ENCODE measurements at regions of chr3 and their contacts with region 1.

Region 1: GRCh38 chr3:194134757-194135528 is 1.0 kb upstream of the HES1 start:
- DNase-seq: peak; percentile 91
- H3K4me3 Mint-ChIP-seq: peak overlapping the region; percentile 77
- H3K27ac Mint-ChIP-seq: peak overlapping the region; percentile 72
- H3K4me1 Mint-ChIP-seq: peaks cover 44% of the 10 kb centered on the region
- H3K27me3 Mint-ChIP-seq: peaks cover 68% of the 10 kb centered on the region

Region 2: DNA sequence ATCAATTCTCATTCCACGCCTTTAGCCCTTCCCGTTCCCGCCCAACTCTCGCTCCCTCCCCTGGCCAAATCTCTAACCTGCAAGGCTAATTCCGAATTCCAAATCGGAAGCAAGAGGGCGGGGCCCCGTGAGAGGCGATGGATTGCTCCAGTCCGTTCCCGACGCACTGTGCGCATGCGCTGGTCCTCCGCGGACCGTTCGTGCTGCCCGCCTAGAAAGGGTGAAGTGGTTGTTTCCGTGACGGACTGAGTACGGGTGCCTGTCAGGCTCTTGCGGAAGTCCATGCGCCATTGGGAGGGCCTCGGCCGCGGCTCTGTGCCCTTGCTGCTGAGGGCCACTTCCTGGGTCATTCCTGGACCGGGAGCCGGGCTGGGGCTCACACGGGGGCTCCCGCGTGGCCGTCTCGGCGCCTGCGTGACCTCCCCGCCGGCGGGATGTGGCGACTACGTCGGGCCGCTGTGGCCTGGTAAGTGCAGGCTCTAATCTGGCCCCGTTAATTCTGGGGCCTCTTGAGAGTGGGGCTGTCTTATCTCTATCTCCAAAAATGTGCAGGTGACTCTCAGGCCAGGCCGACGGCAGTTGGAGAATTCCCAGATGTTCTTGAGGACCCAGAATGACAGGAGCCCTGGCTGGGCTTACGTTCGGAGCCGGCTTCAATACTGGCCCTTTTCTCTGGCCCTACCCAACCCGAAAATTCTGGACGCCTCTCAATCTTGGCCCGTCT is 541.8 kb before region 1 on chr3 and contains the start of gene OPA1:
- CTCF ChIA-PET with region 1: no interaction called
- POLR2A ChIA-PET with region 1: no interaction called
- intact Hi-C with region 1: loop called (anchors 2 kb)
- DNase-seq: peak; percentile 96
- H3K4me3 Mint-ChIP-seq: peak within 1 kb of the TSS; percentile 93
- H3K27ac Mint-ChIP-seq: peak within 1 kb of the TSS; percentile 97
- H3K4me1 Mint-ChIP-seq: peaks cover 37% of the 10 kb centered on the region
- H3K27me3 Mint-ChIP-seq: no peaks in the 10 kb centered on the region
- total RNA-seq, gene OPA1: 92.6 to 92.7 TPM

Region 3: DNA sequence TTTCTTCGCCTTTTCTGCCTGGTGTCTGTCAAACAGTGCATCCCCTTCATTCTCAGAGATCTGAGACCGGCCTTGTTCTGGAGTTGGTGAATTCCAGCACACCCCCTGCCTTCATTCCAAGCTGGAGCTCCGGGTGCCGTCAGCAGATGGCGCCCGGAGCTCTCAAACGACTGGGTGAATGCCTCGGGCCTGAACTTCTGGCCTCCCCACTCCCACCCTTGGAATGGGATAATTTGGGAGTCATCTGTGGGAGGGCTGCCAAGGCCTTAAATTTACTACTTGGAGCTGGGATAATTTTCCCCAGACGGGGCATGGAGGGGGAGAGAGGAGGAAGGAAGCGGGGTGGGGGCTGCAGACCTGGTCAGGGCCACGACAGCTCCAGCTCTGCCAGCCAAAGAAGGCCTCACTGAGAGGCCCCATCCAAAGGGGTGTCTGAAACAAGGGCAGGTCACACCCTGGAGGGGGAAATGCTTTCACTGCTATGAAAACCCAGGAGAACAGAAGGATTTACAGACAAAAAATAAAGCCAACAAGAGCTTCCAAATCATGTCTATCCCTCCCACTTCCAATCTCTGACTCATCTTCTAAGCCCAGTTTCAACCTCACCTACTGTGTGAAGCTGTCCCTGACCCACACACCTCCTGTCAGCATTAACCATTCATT is 354.0 kb before region 1 on chr3:
- CTCF ChIA-PET with region 1: interaction called, 23 read pairs
- POLR2A ChIA-PET with region 1: interaction called, 3 read pairs
- intact Hi-C with region 1: loop called (anchors 2 kb)
- DNase-seq: peak; percentile 42
- H3K4me3 Mint-ChIP-seq: no peak overlapping the region
- H3K27ac Mint-ChIP-seq: no peak overlapping the region
- H3K4me1 Mint-ChIP-seq: peaks cover 7% of the 10 kb centered on the region
- H3K27me3 Mint-ChIP-seq: peaks cover 26% of the 10 kb centered on the region

Region 4: DNA sequence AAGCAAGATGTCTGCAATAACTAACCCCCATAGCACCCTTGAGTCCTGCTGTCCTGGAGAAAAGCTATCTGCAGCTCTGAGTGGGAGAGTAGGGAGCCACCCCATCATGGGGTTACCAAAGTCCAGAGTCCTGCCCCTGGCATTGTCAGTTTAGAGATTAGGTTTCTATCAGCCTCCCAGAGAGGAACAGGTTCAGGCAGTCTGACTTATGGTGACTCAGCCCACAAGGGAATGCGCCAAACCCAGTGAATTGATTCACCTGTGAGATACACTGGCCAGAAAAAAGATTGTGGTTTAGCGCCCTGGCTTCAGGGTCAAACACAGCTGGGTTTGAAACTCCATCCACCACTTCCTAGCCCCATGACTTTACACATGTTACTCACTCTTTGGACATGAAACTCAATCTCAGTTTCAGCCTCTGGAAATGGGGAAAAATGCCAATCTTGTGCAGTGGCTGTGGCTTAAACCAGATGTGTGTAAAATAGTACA is 262.6 kb before region 1 on chr3:
- CTCF ChIA-PET with region 1: no interaction called
- POLR2A ChIA-PET with region 1: interaction called, 3 read pairs
- intact Hi-C with region 1: loop called (anchors 1 kb)
- DNase-seq: peak; percentile 30
- H3K4me3 Mint-ChIP-seq: no peak overlapping the region
- H3K27ac Mint-ChIP-seq: no peak overlapping the region
- H3K4me1 Mint-ChIP-seq: peaks cover 2% of the 10 kb centered on the region
- H3K27me3 Mint-ChIP-seq: peaks cover 29% of the 10 kb centered on the region

Region 5: DNA sequence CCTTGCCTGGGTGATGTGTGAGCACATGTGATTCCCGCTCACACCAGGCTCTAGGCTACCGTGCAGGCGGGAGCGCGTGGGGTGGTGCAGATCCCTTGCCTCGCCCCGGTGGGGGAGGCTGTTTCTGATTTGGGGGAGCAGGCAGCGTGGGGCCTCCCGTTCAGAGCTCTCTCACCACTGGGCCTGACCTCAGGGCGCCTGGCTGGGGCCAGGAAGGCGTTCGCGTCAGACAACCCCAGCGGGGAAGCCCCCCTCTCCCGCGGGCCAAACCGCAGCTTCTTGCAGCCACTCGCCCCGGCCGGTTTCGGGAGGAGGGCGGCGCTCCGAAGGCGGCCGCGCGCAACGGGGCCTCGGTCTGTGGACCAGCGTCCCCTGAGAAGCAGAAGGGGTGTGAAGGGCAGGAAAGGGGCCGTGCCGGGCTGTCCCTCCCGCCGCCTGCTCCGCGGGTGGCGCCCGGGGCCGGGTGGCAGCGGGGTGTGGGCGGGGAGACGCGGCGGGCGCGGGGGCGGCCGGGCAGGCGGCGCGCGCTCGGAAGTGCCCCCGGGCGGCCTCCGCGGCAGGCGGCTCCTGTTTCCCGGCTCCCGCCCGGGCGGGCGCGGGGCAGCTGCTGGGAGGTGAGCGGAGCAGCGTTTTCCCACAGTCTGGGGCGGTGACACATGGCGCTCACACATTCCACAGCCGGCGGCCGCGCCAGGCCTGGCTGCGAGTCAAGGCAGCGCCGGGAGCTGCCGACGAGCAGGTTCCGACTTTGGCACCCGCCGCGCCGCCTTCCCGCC is 64.1 kb before region 1 on chr3:
- CTCF ChIA-PET with region 1: no interaction called
- POLR2A ChIA-PET with region 1: no interaction called
- intact Hi-C with region 1: loop called (anchors 5 kb)
- DNase-seq: peak; percentile 88
- H3K4me3 Mint-ChIP-seq: peak overlapping the region; percentile 52
- H3K27ac Mint-ChIP-seq: no peak overlapping the region
- H3K4me1 Mint-ChIP-seq: peaks cover 21% of the 10 kb centered on the region
- H3K27me3 Mint-ChIP-seq: peaks cover 44% of the 10 kb centered on the region

Region 6: DNA sequence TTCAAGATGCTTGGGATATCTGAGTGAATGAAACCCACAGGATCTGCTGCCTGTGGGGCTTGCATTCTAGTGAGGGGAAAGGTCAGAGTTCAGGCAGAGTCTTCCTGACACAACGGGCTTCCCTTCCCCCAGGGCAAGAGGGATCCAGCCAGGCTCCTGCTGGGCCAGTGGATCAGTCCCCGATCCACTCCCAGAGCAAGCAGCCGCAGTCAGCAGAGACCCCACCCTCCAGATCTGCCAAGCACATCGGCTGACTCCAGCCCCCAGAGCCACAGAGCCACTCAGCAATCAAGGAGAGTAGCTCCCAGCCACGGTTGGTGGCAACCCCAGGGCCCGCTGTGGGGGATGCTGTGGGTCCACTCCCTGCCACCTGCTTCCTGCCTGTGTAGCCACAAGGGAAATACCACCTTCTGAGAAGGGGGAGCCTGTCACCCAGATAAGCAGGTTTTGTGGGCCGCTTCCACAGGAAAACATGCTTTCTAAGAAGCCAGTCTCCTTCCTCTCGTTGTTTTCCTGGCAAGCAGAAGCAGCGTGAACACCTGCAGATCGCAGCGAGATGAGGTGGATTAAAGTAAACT is 171.3 kb after region 1 on chr3:
- CTCF ChIA-PET with region 1: no interaction called
- POLR2A ChIA-PET with region 1: no interaction called
- intact Hi-C with region 1: loop called (anchors 2 kb)
- DNase-seq: peak; percentile 77
- H3K4me3 Mint-ChIP-seq: peak overlapping the region; percentile 30
- H3K27ac Mint-ChIP-seq: peak overlapping the region; percentile 85
- H3K4me1 Mint-ChIP-seq: peaks cover 38% of the 10 kb centered on the region
- H3K27me3 Mint-ChIP-seq: peaks cover 2% of the 10 kb centered on the region

Region 7: GRCh38 chr3:194395778-194396547 is 261.0 kb after region 1 on chr3:
- CTCF ChIA-PET with region 1: no interaction called
- POLR2A ChIA-PET with region 1: no interaction called
- intact Hi-C with region 1: loop called (anchors 2 kb)
- DNase-seq: peak; percentile 74
- H3K4me3 Mint-ChIP-seq: peak overlapping the region; percentile 44
- H3K27ac Mint-ChIP-seq: peak overlapping the region; percentile 49
- H3K4me1 Mint-ChIP-seq: peaks cover 51% of the 10 kb centered on the region
- H3K27me3 Mint-ChIP-seq: peaks cover 33% of the 10 kb centered on the region